Activated CD4-positive, alpha-beta memory T cell treated with anti-CD3 and anti-CD28 coated beads, Interleukin-2, amount 10 ng/mL, durations not matched to agents 7 days and 5 days (primary cell): ENCODE measurements at regions of chr5 and their contacts with region 1.

Region 1: GRCh38 chr5:115180165-115180709 is 10.5 kb upstream of the TRIM36 start:
- DNase-seq: no peak
- H3K4me3 Mint-ChIP-seq: peak overlapping the region; percentile 59
- H3K27ac Mint-ChIP-seq: no peak overlapping the region
- H3K4me1 Mint-ChIP-seq: peaks cover 17% of the 10 kb centered on the region
- H3K27me3 Mint-ChIP-seq: peaks cover 77% of the 10 kb centered on the region

Region 2: DNA sequence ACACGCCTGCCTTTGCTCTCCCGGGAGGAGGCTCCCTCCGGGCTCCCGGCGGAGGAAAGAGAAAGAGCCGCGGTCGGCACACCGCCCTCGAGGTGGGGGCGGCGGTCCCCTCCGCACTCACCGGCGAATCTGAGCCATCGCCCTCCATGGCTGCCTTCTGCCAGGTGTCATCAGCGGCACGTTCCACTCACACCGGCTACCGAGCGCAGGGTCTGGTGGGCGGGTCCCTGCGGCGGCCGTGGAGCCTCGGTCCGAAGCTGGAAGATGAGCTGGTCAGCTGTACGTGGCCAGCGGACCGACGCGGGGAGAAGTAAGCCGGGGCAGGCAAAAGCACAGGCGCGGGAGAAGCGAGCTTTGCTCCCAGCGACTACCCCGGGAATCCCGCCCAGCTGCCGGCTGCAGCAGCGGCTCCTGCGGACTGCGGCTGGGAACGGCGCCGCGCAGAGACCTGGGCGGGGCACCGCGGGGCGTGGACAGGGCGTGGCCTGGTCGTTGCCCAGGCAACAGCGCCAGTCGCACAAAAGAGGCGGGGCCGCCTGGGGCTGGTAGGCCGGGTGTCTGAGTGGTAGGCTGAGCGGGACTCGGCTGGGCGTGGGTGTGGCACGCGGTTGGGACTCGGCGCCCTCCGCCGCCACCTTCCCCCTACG is 10.6 kb before region 1 on chr5 and contains the start of gene TRIM36:
- CTCF ChIA-PET with region 1: no interaction called
- POLR2A ChIA-PET with region 1: interaction called, 14 read pairs
- DNase-seq: peak; percentile 95
- H3K4me3 Mint-ChIP-seq: peak within 1 kb of the TSS; percentile 76
- H3K27ac Mint-ChIP-seq: no peak within 1 kb of the TSS
- H3K4me1 Mint-ChIP-seq: peaks cover 14% of the 10 kb centered on the region
- H3K27me3 Mint-ChIP-seq: peaks cover 70% of the 10 kb centered on the region
- total RNA-seq, gene TRIM36: 0.45 TPM in 1 of 2 experiments, not detected in the other